ENCODE measurements at regions of chr1 and their contacts with region 1.

Region 1: DNA sequence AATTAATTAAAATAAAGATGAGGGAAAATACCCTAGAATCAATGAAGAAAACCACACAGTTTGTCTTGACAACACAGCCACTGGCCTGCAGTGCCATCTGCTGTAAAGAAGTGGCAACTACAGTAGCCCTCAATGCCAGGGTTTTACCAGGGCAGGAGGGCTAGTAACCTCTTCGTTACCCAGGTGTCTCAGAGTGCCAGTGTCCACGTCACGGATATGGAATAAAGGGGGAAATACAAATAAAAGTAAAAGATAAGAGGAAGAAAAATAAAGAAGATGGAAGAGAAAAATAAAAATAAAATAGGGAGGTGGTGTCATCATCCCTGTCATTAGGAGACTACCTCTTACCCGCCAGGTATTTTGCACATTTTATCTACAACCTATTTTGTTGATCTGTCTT is 14.2 kb upstream of the SLC44A3 start:
- DNase-seq: peak; percentile 45
- ATAC-seq: no peak
- H3K4me3 ChIP-seq: no peak overlapping the region
- H3K27ac ChIP-seq: no peak overlapping the region
- H3K4me1 ChIP-seq: peaks cover 77% of the 10 kb centered on the region
- H3K27me3 ChIP-seq: no peaks in the 10 kb centered on the region
- CTCF ChIP-seq: peak; percentile 85
- EP300 ChIP-seq: no peak
- POLR2A ChIP-seq: no peak
- RAD21 ChIP-seq: peak; percentile 83

Region 2: DNA sequence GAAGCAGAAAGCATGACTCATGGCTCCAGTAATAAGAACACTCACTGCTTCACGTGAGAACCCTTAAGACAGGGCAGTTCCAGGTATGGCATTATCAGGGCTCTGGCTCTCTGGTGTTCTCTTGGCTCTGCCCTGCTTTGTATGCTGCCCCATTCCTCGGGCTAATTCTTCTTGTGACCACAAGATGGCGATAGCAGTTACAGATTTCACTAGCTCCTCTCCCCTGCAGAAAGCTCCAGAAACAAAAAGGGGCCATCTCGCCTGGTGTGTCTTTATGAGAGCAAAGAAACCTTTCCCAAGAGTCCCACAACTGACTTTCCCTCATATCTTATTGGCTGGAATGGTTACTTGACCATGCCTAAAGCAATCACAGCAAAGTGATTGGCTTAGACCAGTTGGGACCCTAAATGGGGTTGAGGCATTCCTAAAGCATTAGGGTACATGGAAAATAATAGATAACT is 324.4 kb before region 1 on chr1:
- CTCF ChIA-PET with region 1: interaction called, 13 read pairs
- POLR2A ChIA-PET with region 1: no interaction called
- in situ Hi-C with region 1: loop called (anchors 10 kb)
- intact Hi-C with region 1: loop called (anchors 2 kb)
- DNase-seq: peak; percentile 62
- ATAC-seq: peak; percentile 95
- H3K4me3 ChIP-seq: no peak overlapping the region
- H3K27ac ChIP-seq: no peak overlapping the region
- H3K4me1 ChIP-seq: no peaks in the 10 kb centered on the region; the same call in 1 of the 2 replicates
- H3K27me3 ChIP-seq: no peaks in the 10 kb centered on the region
- CTCF ChIP-seq: peak; percentile 80
- EP300 ChIP-seq: no peak
- POLR2A ChIP-seq: no peak
- RAD21 ChIP-seq: 0 out of 2 replicates have a peak, but pooled peaks have one; percentile 35

Region 3: GRCh38 chr1:94522304-94522703 is 283.6 kb before region 1 on chr1:
- CTCF ChIA-PET with region 1: interaction called, 4 read pairs
- POLR2A ChIA-PET with region 1: interaction called, 3 read pairs
- in situ Hi-C with region 1: loop called (anchors 5 kb)
- intact Hi-C with region 1: no loop called
- DNase-seq: no peak
- ATAC-seq: no peak
- H3K4me3 ChIP-seq: no peak overlapping the region
- H3K27ac ChIP-seq: no peak overlapping the region
- H3K4me1 ChIP-seq: no peaks in the 10 kb centered on the region
- H3K27me3 ChIP-seq: no peaks in the 10 kb centered on the region
- CTCF ChIP-seq: peak; percentile 47
- EP300 ChIP-seq: no peak
- POLR2A ChIP-seq: no peak
- RAD21 ChIP-seq: no peak

Region 4: DNA sequence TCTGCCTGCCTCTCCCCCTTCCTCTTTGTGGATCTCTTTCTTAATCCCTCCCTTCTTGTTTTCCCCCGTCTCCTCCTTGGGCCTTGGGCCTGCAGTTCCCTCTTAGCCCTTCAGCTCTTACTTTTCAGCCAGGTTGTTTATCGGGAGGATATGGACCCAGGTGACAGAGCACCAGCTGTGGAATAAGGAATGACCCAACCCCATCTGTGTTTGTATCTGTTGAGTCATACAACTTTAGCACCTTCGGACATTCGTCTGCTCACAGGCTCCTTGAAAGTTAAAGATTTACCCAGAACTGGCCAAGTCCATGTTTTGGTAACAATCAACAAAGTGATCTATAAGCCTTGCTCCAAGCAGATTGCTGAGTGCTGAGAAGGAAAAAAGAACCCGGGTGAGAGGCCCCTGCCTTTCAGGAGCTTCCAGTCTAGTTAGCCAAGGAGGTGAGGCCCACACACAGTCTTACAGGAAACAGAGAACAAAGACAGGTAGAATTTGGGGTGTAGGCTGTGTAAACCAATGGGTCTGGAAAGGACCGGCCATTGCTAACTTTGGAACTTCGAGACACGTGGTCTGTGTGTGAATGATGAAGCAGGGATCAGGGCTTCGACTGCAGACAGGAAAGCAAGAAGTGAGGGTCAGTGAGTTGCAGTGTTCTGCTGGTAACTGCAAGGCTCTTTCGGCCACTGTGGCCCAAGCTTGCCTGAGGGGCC is 197.6 kb before region 1 on chr1:
- CTCF ChIA-PET with region 1: no interaction called
- POLR2A ChIA-PET with region 1: no interaction called
- in situ Hi-C with region 1: loop called (anchors 10 kb)
- intact Hi-C with region 1: loop called (anchors 5 kb)
- DNase-seq: peak; percentile 41
- ATAC-seq: peak; percentile 82
- H3K4me3 ChIP-seq: 0 out of 6 replicates have a peak overlapping the region, but pooled peaks of 1 of the 3 experiments have one; percentile 14
- H3K27ac ChIP-seq: peak overlapping the region; percentile 31
- H3K4me1 ChIP-seq: peaks cover 63% of the 10 kb centered on the region
- H3K27me3 ChIP-seq: no peaks in the 10 kb centered on the region
- CTCF ChIP-seq: no peak
- EP300 ChIP-seq: 0 out of 4 replicates have a peak, but pooled peaks of 1 of the 2 experiments have one; percentile 20
- POLR2A ChIP-seq: no peak
- RAD21 ChIP-seq: no peak

Region 5: DNA sequence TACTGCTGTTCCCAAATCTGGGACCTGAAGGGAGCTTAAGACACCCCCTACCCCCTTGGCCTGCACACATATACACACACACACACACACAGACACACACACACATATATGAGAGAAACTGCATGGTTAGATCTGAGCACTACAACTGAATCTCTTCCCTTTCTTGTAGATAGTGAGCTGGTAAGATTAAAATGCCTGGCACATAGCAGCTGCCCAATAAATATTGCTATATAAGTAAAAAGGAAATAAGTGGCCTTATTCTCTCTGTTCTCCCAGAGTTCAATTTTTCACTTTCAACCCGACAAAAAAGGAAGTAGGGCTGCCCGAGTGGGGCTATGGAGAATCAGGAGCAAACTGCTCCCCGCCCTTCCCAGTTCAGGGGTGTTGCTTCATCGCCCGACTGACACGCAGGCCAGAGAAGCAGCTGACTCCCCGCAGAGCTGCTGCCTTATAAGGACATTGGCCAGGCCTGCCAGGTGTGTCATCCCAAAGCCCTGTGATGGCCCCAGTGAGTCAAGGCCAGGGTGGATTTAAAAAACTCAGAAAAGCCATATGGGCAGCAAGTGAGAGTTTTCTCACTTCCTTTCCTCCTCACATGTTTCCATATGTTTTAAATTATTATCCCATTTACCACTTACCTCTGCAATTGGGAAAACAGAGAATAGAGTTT is 92.3 kb before region 1 on chr1:
- CTCF ChIA-PET with region 1: no interaction called
- POLR2A ChIA-PET with region 1: no interaction called
- in situ Hi-C with region 1: loop called (anchors 5 kb)
- intact Hi-C with region 1: no loop called
- DNase-seq: peak; percentile 92
- ATAC-seq: peak; percentile 98
- H3K4me3 ChIP-seq: no peak overlapping the region; a peak in 1 of 6 replicates
- H3K27ac ChIP-seq: peak overlapping the region; percentile 36
- H3K4me1 ChIP-seq: peaks cover 44% of the 10 kb centered on the region
- H3K27me3 ChIP-seq: no peaks in the 10 kb centered on the region
- CTCF ChIP-seq: 0 out of 2 replicates have a peak, but pooled peaks have one; percentile 8
- EP300 ChIP-seq: peak in 1 of 2 experiments; percentile 62; a peak in 2 of 4 replicates
- POLR2A ChIP-seq: no peak
- RAD21 ChIP-seq: no peak

Region 6: GRCh38 chr1:95013950-95014574 is 208.2 kb after region 1 on chr1:
- CTCF ChIA-PET with region 1: no interaction called
- POLR2A ChIA-PET with region 1: no interaction called
- in situ Hi-C with region 1: no loop called
- intact Hi-C with region 1: no loop called
- DNase-seq: peak; percentile 92
- ATAC-seq: peak; percentile 98
- H3K4me3 ChIP-seq: no peak overlapping the region; a peak in 1 of 6 replicates
- H3K27ac ChIP-seq: peak overlapping the region; percentile 85
- H3K4me1 ChIP-seq: peaks cover 60% of the 10 kb centered on the region
- H3K27me3 ChIP-seq: no peaks in the 10 kb centered on the region
- CTCF ChIP-seq: no peak
- EP300 ChIP-seq: peak in 1 of 2 experiments; percentile 93; a peak in 2 of 4 replicates
- POLR2A ChIP-seq: no peak
- RAD21 ChIP-seq: no peak

Region 7: DNA sequence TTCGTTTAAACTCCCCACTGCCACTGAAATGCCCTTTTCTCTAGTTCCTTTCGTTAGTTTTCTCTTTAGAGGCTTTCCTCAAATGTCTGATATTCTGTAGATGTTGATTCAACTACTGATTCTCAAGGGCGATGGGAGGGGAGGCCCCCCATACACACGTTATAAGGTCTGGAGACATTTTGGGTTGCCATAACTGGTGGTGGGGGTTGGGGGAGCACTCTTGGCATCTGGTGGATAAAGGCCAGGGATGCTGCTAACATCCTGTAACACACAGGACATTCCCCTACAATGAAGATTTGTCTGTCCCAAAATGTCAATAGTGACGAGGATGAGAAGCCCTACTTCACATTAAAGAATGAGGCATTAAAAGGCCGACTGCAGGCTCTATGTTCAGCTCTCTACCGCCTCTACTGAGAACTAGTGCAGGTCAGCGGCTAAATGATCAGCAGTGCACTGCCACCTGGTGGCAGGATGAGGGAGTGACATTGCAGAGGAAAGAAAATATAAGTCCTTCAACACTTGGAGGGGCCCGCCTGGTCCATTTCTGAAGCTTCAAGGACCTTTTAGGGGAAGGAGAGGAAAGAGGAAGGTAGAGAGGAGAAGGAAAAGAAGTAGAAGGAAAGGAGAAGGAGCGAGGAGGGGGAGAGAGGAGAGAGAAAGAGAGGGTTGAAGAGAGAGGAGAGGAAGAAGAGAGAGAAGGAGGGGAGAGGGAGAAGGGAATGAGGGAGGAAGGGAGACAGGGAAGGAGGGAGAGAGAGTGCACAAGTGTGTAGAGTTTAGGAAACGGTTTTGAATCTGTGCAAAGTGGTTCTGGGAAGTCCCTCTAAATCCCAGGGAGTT is 237.4 kb after region 1 on chr1:
- CTCF ChIA-PET with region 1: interaction called, 4 read pairs
- POLR2A ChIA-PET with region 1: no interaction called
- in situ Hi-C with region 1: no loop called
- intact Hi-C with region 1: loop called (anchors 5 kb)
- DNase-seq: peak; percentile 77
- ATAC-seq: peak; percentile 91
- H3K4me3 ChIP-seq: no peak overlapping the region
- H3K27ac ChIP-seq: no peak overlapping the region
- H3K4me1 ChIP-seq: peaks cover 17% of the 10 kb centered on the region
- H3K27me3 ChIP-seq: no peaks in the 10 kb centered on the region
- CTCF ChIP-seq: peak; percentile 95
- EP300 ChIP-seq: no peak
- POLR2A ChIP-seq: no peak
- RAD21 ChIP-seq: peak; percentile 95

Measured in HepG2 (cell line).